HepG2 (cell line): ENCODE measurements at regions of chr16 and their contacts with region 1.

Region 1: DNA sequence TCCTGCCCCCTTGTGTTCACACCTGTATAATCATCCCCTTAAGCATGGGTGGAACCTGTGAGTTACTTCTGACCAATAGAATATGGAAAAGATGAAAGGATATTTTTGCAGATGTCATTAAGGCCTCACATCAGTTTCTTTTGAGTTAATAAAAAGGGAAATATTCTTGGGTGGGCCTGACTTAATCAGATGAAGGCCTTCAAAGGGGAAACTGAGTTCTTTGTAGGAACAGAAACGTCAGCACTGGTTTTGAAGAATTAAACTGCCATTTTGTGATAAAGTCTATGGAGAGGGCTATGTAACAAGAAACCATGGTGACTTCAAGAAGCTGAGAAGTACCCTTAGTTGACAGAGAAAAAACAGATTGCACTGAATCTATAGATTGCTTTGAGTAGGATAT is 168.7 kb upstream of the CNTNAP4 start:
- DNase-seq: no peak
- ATAC-seq: peak; percentile 49; the same call in 2 of the 3 replicates
- H3K4me3 ChIP-seq: no peak overlapping the region
- H3K27ac ChIP-seq: no peak overlapping the region
- H3K4me1 ChIP-seq: no peaks in the 10 kb centered on the region
- H3K27me3 ChIP-seq: no peaks in the 10 kb centered on the region
- CTCF ChIP-seq: no peak
- EP300 ChIP-seq: no peak
- POLR2A ChIP-seq: no peak
- RAD21 ChIP-seq: no peak

Region 2: GRCh38 chr16:75789237-75789636 is 319.2 kb before region 1 on chr16:
- CTCF ChIA-PET with region 1: no interaction called
- POLR2A ChIA-PET with region 1: no interaction called
- in situ Hi-C with region 1: no loop called
- intact Hi-C with region 1: loop called (anchors 5 kb)
- DNase-seq: peak; percentile 53
- ATAC-seq: peak; percentile 82
- H3K4me3 ChIP-seq: no peak overlapping the region
- H3K27ac ChIP-seq: no peak overlapping the region
- H3K4me1 ChIP-seq: no peaks in the 10 kb centered on the region
- H3K27me3 ChIP-seq: no peaks in the 10 kb centered on the region
- CTCF ChIP-seq: peak; percentile 84
- EP300 ChIP-seq: no peak
- POLR2A ChIP-seq: no peak
- RAD21 ChIP-seq: peak; percentile 52; the same call in 1 of the 2 replicates

Region 3: GRCh38 chr16:76265434-76266045 is 157.1 kb after region 1 on chr16:
- CTCF ChIA-PET with region 1: no interaction called
- POLR2A ChIA-PET with region 1: no interaction called
- in situ Hi-C with region 1: no loop called
- intact Hi-C with region 1: no loop called
- DNase-seq: peak; percentile 31
- ATAC-seq: peak; percentile 88
- H3K4me3 ChIP-seq: no peak overlapping the region
- H3K27ac ChIP-seq: no peak overlapping the region
- H3K4me1 ChIP-seq: no peaks in the 10 kb centered on the region
- H3K27me3 ChIP-seq: no peaks in the 10 kb centered on the region
- CTCF ChIP-seq: peak; percentile 58
- EP300 ChIP-seq: no peak
- POLR2A ChIP-seq: no peak
- RAD21 ChIP-seq: no peak